Dendritic cell treated with granulocyte-macrophage colony-stimulating factor and Interleukin-4, amounts not matched to agents 40 ng/mL and 50 ng/mL, for 4 days (primary cell): ENCODE measurements at regions of chr1 and their contacts with region 1.

Region 1: DNA sequence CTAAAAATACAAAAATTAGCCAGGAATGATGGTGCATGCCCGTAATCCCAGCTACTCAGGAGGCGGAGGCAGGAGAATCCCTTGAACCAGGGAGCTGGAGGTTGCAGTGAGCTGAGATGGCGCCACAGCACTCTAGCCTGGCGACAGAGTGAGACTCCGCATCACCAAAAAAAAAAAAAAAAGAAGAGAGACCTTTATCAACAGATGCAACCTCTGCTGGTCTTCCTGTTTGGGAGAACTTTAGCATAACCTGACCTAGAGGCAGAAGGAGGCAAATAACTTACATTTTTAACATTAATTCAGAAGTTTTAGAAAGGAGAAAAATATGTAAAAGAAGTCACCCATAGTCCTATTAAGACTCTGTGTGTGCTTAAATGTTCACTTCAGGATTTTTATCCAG is 32.4 kb downstream of the SLAMF1 start:
- H3K4me3 Mint-ChIP-seq: no peak overlapping the region
- H3K27ac Mint-ChIP-seq: no peak overlapping the region
- H3K4me1 Mint-ChIP-seq: peaks cover 58% of the 10 kb centered on the region
- H3K27me3 Mint-ChIP-seq: no peaks in the 10 kb centered on the region

Region 2: DNA sequence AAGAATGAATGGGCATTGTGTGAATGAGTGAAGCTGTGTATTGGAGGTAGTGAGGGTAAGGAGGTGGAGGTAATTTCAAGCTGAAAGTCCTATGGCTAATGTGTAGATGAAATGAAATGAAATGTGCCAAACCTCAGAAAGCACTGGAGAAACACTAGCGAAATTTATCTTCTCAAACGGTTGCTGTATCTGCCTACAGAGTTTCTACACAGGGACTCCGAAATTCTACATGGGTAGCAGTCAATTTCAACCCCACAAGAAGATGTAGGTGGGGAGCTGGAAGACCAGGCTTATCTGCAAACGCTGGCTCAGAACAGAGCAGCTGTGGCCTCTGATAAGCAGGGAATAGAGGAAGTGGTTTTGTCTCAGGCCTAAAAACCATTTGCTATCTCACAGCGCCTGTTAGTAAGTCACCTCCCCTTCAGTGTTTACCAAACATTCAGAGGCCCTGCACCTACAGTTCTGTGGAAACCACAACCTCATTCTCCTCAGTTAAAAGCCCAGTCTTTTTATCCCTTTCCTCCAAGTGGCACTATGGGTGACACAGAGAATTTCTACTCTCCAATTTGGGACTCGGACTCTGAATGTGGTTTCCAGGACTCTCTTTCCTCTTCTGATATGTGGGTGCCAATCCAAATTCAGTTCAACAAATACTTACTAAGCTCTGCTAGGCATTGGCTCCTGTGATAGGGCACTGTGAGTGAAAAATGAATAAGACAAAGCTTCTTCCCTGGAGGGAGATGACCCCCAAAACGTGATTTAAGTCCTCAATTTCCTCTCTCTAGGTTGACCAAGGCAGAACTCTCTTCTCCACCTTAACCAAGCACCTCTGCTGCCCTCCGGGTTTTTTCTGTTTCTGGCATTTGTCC is 74.2 kb before region 1 on chr1:
- intact Hi-C with region 1: no loop called
- H3K4me3 Mint-ChIP-seq: no peak overlapping the region
- H3K27ac Mint-ChIP-seq: peak overlapping the region; percentile 83
- H3K4me1 Mint-ChIP-seq: peaks cover 46% of the 10 kb centered on the region
- H3K27me3 Mint-ChIP-seq: no peaks in the 10 kb centered on the region

Region 3: DNA sequence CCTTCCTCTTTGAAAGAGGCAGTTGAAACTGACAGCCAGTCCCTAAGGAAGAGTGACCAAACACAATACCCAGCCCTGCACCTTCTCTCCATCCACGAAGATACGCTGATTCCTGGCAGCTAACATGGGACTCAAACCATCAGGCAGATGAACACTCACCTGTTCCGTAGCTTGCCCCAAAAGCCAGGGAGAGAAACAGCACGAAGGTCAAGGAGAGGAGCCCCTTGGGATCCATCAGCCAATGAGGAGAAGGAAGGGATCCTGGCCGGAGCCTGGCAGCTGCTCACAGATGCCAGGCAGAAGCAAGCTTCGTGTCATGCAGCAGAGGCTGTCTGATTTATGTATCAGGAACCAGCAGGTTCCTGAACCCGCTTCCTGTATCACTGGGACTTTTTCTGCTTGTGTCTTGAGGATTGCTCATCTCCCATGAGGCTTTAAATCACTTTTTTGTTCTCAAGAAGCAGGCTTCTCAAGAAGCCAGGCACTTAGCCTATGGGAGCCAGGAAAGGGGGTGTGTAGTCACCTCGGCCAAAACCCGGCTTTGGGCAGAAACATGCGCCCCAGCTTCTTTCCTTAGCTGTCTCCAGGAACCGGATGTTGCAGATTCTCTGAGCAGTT is 32.4 kb after region 1 on chr1 and contains the start of gene SLAMF1:
- intact Hi-C with region 1: loop called (anchors 5 kb)
- H3K4me3 Mint-ChIP-seq: peak within 1 kb of the TSS; percentile 88
- H3K27ac Mint-ChIP-seq: peak within 1 kb of the TSS; percentile 89
- H3K4me1 Mint-ChIP-seq: peaks cover 59% of the 10 kb centered on the region
- H3K27me3 Mint-ChIP-seq: no peaks in the 10 kb centered on the region

Region 4: GRCh38 chr1:161159087-161159912 is 544.9 kb after region 1 on chr1 and contains the start of gene USP21:
- intact Hi-C with region 1: no loop called
- H3K4me3 Mint-ChIP-seq: peak within 1 kb of the TSS; percentile 89
- H3K27ac Mint-ChIP-seq: peak within 1 kb of the TSS; percentile 89
- H3K4me1 Mint-ChIP-seq: peaks cover 68% of the 10 kb centered on the region
- H3K27me3 Mint-ChIP-seq: no peaks in the 10 kb centered on the region